ENCODE measurements at regions of chr12 and their contacts with region 1.

Region 1: GRCh38 chr12:9813821-9814809 is 13.2 kb upstream of the KLRF1 start:
- DNase-seq: peak; percentile 81 to 91 (median 88)
- ATAC-seq: peak; percentile 99 to 100 (median 99)
- H3K4me3 ChIP-seq: peak overlapping the region; percentile 21 to 35 (median 29)
- H3K27ac ChIP-seq: no peak overlapping the region
- H3K4me1 ChIP-seq: no peaks in the 10 kb centered on the region
- H3K27me3 ChIP-seq: no peaks in the 10 kb centered on the region
- CTCF ChIP-seq: peak; percentile 90 to 95 (median 94)
- POLR2A ChIP-seq: no peak

Region 2: DNA sequence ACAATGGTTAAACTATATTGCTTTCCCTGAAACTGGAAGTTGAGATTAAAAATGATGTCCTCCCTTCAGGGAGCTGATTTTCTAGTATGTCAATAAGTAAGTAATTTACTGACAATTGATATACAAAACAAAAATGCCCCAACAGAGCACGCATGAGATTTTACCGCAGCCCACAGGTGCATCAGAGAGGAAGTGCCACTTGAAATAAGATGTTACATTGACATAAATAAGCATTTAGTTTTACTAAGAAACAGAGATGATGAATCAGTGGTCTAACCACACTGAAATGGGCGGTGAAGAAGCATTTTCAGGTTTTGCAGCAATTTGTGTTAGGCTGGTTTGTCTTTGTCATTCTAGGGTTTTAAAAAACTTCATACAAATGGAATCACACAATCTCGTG is 72.4 kb before region 1 on chr12:
- intact Hi-C with region 1: no loop called
- DNase-seq: no peak
- ATAC-seq: peak in 1 of 4 donors; percentile 28
- H3K4me3 ChIP-seq: no peak overlapping the region
- H3K27ac ChIP-seq: no peak overlapping the region
- H3K4me1 ChIP-seq: no peaks in the 10 kb centered on the region
- H3K27me3 ChIP-seq: peaks cover 0 to 5% of the 10 kb centered on the region in 2 donors
- CTCF ChIP-seq: no peak
- POLR2A ChIP-seq: no peak

Region 3: DNA sequence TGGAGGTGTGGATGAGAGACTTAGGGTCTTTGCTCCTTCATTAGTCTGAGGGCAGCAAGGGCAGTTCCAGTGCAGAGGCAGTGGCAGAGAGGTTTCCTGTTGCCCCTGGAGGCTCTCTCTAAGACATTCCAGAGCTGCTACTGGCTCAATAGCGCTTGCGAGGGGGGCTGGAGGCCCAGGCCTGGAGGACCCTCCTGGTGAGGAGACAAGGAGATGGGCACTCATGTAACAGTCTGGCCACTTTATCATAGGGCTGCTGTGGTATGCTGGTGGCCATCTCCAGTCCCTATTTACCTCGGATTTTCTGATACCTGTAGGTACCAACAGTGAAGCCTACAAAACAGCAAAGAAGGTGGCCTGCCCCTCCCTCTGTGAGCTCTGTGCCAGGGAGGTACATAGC is 105.3 kb after region 1 on chr12:
- intact Hi-C with region 1: loop called in 1 of 2 experiments (anchors 5 kb)
- DNase-seq: no peak
- ATAC-seq: no peak
- H3K4me3 ChIP-seq: no peak overlapping the region
- H3K27ac ChIP-seq: no peak overlapping the region
- H3K4me1 ChIP-seq: no peaks in the 10 kb centered on the region
- H3K27me3 ChIP-seq: no peaks in the 10 kb centered on the region
- CTCF ChIP-seq: no peak
- POLR2A ChIP-seq: no peak